Activated B cell treated with CpG ODN at 0.5 μM for 24 hours (primary cell): ENCODE measurements at regions of chr15 and their contacts with region 1.

Region 1: DNA sequence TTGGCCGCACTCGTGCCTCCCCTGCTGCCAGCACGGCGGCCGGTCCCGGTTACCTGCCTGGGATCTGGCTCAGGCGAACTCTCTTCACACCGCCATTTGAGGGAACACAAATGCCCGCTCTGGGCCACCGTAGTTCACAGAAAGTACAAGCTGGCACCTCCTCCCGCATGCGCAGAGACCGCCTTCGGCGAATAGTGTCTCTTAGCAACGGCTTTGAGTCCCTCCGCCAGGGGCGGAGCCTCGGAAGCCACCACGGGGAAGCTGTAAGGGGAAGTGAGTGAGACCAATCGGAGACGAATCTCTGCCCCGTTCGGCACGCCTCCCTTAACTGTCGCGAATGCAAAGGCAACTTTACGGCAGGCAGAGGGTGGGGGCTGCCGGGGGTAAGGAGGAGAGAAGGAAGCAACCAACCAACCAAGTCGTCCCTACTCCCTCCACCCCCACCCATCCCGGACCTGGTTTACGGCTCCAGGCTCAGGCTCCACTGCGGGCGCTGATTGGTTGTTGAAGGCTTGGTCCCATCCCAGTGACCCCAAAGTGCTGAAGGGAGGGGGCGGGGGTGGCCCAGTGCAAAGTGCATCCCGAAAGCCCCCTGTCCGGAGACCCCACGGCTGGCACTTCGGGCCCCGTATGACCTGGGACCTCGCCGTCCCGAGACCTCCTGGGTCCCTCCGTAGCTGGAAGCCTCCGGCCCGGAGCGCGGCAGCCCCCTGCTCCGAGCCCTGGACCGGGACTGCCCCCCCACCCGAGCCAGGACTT is at the starts of genes ASB7 and LINS1:
- DNase-seq: peak; percentile 97
- ATAC-seq: peak; percentile 87
- H3K4me3 Mint-ChIP-seq: no peak within 1 kb of the TSS
- H3K27ac Mint-ChIP-seq: no peak within 1 kb of the TSS
- H3K4me1 Mint-ChIP-seq: peaks cover 46% of the 10 kb centered on the region
- H3K27me3 Mint-ChIP-seq: no peaks in the 10 kb centered on the region
- CTCF ChIP-seq: no peak
- total RNA-seq, gene ASB7: 18.3 and 21.3 TPM in 2 replicates
- total RNA-seq, gene LINS1: 31.9 and 33.3 TPM in 2 replicates

Region 2: GRCh38 chr15:99250494-99251435 is 1351.5 kb before region 1 on chr15:
- CTCF ChIA-PET with region 1: no interaction called
- POLR2A ChIA-PET with region 1: interaction called, 3 read pairs
- intact Hi-C with region 1: loop called (anchors 1 kb)
- DNase-seq: peak; percentile 85
- ATAC-seq: peak; percentile 97
- H3K4me3 Mint-ChIP-seq: peak overlapping the region; percentile 91
- H3K27ac Mint-ChIP-seq: peak overlapping the region; percentile 89
- H3K4me1 Mint-ChIP-seq: peaks cover 29% of the 10 kb centered on the region
- H3K27me3 Mint-ChIP-seq: no peaks in the 10 kb centered on the region
- CTCF ChIP-seq: no peak

Region 3: GRCh38 chr15:100341662-100342560 is 260.3 kb before region 1 on chr15 and contains the start of gene ADAMTS17:
- CTCF ChIA-PET with region 1: no interaction called
- POLR2A ChIA-PET with region 1: no interaction called
- intact Hi-C with region 1: loop called (anchors 2 kb)
- DNase-seq: peak; percentile 70
- ATAC-seq: peak; percentile 99
- H3K4me3 Mint-ChIP-seq: peak within 1 kb of the TSS; percentile 50
- H3K27ac Mint-ChIP-seq: no peak within 1 kb of the TSS
- H3K4me1 Mint-ChIP-seq: peaks cover 9% of the 10 kb centered on the region
- H3K27me3 Mint-ChIP-seq: peaks cover 29% of the 10 kb centered on the region
- CTCF ChIP-seq: no peak
- total RNA-seq, gene ADAMTS17: 1.6 TPM in 1 of 2 replicates, not detected in the other

Region 4: DNA sequence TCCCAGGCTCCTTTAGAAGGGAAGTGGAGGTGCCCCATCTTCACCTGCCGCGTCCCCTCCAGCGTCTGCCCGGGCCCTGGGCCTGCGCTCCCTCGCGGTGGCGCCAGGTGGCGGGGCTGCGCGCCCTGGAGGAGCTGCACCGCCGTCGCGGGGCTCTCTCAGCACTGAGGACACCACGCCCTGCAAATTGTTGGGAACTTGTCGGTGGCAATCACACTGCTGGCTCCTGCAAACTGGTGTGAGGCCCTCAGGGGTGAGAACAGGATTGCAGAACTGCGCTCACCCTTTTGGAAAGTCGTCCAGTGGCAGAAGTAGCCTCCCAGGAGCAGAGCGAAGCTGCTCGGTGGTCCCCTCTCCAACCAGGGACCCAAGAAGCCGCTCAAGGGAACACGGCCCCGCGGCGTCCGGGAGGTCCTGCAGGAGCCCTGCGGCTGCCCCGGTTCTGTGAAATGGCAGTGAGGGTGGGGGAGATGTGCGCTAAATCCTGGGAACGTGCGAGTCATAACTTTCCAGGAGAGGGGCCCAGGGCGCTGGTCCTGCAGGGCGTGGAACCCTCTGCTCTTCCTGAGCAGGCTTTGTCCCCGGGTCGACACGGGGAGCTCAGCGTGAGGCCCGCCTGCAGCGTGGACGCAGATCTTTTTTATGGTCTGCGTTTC is 315.9 kb after region 1 on chr15:
- CTCF ChIA-PET with region 1: no interaction called
- POLR2A ChIA-PET with region 1: interaction called, 4 read pairs
- intact Hi-C with region 1: loop called (anchors 1 kb)
- DNase-seq: peak; percentile 81
- ATAC-seq: peak; percentile 79
- H3K4me3 Mint-ChIP-seq: peak overlapping the region; percentile 89
- H3K27ac Mint-ChIP-seq: peak overlapping the region; percentile 81
- H3K4me1 Mint-ChIP-seq: peaks cover 44% of the 10 kb centered on the region
- H3K27me3 Mint-ChIP-seq: no peaks in the 10 kb centered on the region
- CTCF ChIP-seq: peak; percentile 57

Region 5: GRCh38 chr15:101294731-101295606 is 692.7 kb after region 1 on chr15 and contains the start of gene SNRPA1:
- CTCF ChIA-PET with region 1: no interaction called
- POLR2A ChIA-PET with region 1: interaction called, 13 read pairs
- intact Hi-C with region 1: loop called (anchors 1 kb)
- DNase-seq: peak; percentile 99
- ATAC-seq: peak; percentile 83
- H3K4me3 Mint-ChIP-seq: peak within 1 kb of the TSS; percentile 97
- H3K27ac Mint-ChIP-seq: peak within 1 kb of the TSS; percentile 95
- H3K4me1 Mint-ChIP-seq: peaks cover 45% of the 10 kb centered on the region
- H3K27me3 Mint-ChIP-seq: no peaks in the 10 kb centered on the region
- CTCF ChIP-seq: no peak
- total RNA-seq, gene SNRPA1: 119 and 122 TPM in 2 replicates